ENCODE measurements at regions of chr2 and their contacts with region 1.

Region 1: DNA sequence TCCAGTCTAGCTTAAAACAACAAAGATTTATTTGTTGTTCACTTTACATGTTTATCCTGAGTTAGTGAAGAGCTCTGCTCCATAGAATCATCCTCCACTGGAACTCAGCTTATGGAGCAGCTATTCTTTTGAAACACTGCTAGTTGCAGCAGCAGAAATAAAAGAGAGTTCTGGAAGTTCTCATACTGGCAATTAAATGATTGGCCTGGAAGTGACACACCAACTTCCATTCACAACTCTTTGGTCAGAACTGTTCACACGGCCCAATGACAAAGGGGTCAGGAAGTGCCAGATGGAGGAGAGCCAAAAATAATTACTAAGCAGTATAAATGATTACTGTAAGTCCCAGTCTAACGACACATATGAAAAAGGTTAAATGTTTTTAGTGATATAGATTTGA is 39.1 kb downstream of the FBXO11 start:
- DNase-seq: no peak
- H3K4me3 ChIP-seq: no peak overlapping the region
- H3K27ac ChIP-seq: peak overlapping the region in 3 of 4 donors; percentile 22 to 50 (median 38)
- H3K4me1 ChIP-seq: peaks cover 8 to 53% (median 25%) of the 10 kb centered on the region in 4 donors
- H3K27me3 ChIP-seq: no peaks in the 10 kb centered on the region
- CTCF ChIP-seq: no peak
- EP300 ChIP-seq: no peak
- POLR2A ChIP-seq: no peak

Region 2: DNA sequence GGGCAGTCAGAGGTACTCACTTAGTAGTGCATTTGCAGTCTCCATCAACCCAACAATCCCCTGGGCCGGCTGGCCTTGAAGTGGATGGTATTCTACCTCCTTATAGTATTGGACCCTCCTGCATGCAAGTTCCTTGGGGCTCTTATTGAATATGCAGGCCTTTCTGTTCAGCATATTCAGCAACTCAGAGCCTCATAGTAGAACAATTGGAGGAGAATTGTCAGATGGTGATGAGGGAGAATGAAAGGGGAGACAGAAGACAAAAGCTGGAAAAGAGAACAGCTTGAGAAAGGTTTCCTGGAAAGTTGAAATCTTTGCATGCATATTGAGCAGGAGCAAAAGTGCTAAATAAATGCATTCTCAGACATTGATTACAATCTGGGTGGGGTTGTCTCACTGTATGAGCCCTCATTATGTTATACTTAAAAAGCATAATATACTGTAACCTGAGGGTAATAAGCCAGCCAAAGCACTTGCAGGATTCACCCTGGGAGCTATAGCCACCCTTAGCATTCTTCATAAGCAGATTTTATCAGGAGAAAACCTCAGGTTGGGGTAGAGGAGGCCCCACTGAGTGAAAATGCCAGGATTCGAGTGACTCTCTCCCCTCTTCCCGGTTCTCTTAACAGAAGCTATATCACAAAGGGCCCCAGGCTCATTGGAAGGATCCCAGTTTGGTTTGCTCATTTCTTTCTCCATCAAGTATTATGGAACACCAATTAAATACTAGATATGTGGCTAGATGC is 286.2 kb before region 1 on chr2:
- in situ Hi-C with region 1: no loop called
- intact Hi-C with region 1: no loop called
- DNase-seq: no peak
- H3K4me3 ChIP-seq: no peak overlapping the region
- H3K27ac ChIP-seq: no peak overlapping the region
- H3K4me1 ChIP-seq: no peaks in the 10 kb centered on the region
- H3K27me3 ChIP-seq: peaks cover 2% of the 10 kb centered on the region
- CTCF ChIP-seq: no peak
- EP300 ChIP-seq: no peak
- POLR2A ChIP-seq: no peak

Region 3: GRCh38 chr2:48026865-48027264 is 159.7 kb after region 1 on chr2:
- in situ Hi-C with region 1: no loop called
- intact Hi-C with region 1: no loop called
- DNase-seq: no peak
- H3K4me3 ChIP-seq: no peak overlapping the region
- H3K27ac ChIP-seq: no peak overlapping the region
- H3K4me1 ChIP-seq: no peaks in the 10 kb centered on the region
- H3K27me3 ChIP-seq: no peaks in the 10 kb centered on the region
- CTCF ChIP-seq: no peak
- EP300 ChIP-seq: no peak
- POLR2A ChIP-seq: no peak

Region 4: DNA sequence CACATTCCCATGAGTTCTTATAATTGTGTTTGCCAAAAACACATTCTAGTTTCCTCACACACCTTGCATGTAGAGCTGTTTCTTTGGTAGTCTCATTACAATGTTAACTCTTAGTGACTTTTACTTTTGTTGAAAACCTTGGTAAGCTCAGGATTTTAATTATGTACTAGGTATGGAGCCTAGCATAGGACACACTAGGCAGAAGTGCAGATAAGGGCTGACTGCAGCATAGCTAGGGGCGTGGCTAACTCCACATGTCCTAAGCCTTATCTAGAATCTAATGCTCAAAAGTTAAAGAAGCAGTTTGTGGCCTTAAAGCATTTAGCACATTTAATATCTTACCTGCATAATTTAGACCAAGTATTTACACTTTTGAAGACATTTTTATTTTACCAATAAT is 192.8 kb after region 1 on chr2:
- in situ Hi-C with region 1: no loop called
- intact Hi-C with region 1: no loop called
- DNase-seq: no peak
- H3K4me3 ChIP-seq: no peak overlapping the region
- H3K27ac ChIP-seq: no peak overlapping the region
- H3K4me1 ChIP-seq: no peaks in the 10 kb centered on the region
- H3K27me3 ChIP-seq: no peaks in the 10 kb centered on the region
- CTCF ChIP-seq: no peak
- EP300 ChIP-seq: no peak
- POLR2A ChIP-seq: no peak

Region 5: DNA sequence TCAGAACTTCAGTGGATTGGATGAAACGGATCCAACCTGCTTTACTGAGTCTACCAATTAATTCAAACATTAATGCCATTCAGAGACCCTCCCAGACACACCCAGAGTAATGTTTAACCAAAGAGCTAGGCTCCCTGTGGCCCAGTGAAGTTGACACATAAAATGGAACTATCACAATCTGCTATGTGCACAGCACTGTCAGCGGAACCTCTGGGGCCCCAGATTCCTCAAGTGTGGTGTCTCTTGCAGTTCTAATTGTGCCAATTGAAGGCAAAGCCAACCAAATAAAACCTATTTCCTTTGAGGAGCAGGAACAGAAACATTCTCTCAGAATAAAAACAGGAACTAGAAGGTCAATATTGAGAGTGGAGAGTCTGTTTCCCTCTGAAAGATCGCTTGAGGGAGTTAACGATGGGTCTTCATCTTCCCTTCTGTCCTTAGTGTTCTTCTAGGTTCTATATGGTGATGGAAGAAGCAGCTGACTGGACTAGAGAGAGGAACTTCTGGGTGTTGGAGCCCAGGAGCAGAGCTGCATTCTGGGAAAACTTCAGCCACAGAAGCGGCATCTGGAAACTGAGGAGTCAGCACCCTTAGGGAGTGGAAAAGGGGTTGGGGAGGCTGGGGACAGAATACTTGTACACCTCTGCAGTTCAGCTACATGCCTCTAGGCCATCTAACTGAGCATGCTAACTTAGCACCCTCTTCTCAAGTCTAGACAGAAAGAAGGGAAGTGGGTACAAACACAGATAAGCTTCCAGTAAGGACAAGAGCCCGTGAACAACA is 213.5 kb after region 1 on chr2:
- in situ Hi-C with region 1: loop called in 1 of 4 experiments (anchors 25 kb)
- intact Hi-C with region 1: no loop called
- DNase-seq: no peak
- H3K4me3 ChIP-seq: no peak overlapping the region
- H3K27ac ChIP-seq: no peak overlapping the region
- H3K4me1 ChIP-seq: no peaks in the 10 kb centered on the region
- H3K27me3 ChIP-seq: no peaks in the 10 kb centered on the region
- CTCF ChIP-seq: no peak
- EP300 ChIP-seq: no peak
- POLR2A ChIP-seq: no peak

Region 6: GRCh38 chr2:48107326-48107925 is 240.2 kb after region 1 on chr2:
- in situ Hi-C with region 1: loop called in 1 of 4 experiments (anchors 10 kb)
- intact Hi-C with region 1: no loop called
- DNase-seq: no peak
- H3K4me3 ChIP-seq: no peak overlapping the region
- H3K27ac ChIP-seq: peak overlapping the region; percentile 30 to 52 (median 36)
- H3K4me1 ChIP-seq: peaks cover 0 to 33% (median 20%) of the 10 kb centered on the region in 4 donors
- H3K27me3 ChIP-seq: no peaks in the 10 kb centered on the region
- CTCF ChIP-seq: no peak
- EP300 ChIP-seq: no peak
- POLR2A ChIP-seq: no peak

Region 7: DNA sequence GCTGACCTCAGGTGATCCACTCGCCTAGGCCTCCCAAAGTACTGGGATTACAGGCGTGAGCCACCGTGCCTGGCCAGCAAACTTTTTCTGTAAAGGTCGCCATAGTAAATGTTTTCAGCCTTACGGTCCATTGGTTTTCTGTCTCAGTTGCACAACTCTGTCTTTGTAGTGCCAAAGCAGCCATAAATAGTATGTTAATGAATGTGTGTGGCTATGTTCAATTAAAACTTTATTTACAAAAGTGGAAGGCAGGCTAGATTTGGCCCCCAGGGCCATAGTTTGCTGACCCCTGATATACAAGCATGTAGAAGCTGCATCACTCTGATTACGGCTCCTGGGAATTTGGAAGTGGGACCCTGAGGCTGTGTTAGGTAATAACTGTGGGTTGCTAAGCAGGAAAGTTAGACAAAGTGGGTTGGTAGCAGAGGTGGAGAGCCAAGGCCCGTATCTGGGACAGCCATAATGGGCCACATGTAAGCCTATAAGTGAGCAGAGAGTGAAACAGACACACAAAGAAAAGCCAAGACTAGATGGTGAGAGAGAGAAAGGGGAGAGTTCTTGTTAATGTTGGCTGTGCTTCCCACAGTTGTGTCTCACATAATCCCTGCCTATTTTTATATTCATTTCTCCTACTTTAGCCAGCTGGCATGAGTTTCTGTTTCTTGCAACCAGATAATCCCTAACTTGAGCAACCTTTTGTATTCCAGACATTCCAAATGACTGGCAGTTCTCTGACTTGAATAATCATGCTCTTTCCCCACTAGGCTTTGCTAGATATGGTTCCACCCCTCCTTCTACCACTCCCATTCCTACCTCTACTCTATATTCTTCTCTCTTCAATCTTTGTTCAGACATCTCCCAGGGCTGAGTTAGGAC is 439.4 kb after region 1 on chr2:
- in situ Hi-C with region 1: no loop called
- intact Hi-C with region 1: no loop called
- DNase-seq: no peak
- H3K4me3 ChIP-seq: no peak overlapping the region
- H3K27ac ChIP-seq: peak overlapping the region in 1 of 4 donors; percentile 48
- H3K4me1 ChIP-seq: no peaks in the 10 kb centered on the region
- H3K27me3 ChIP-seq: no peaks in the 10 kb centered on the region
- CTCF ChIP-seq: no peak
- EP300 ChIP-seq: no peak
- POLR2A ChIP-seq: no peak

Region 8: GRCh38 chr2:48420512-48421197 is 553.5 kb after region 1 on chr2:
- in situ Hi-C with region 1: loop called in 1 of 4 experiments (anchors 25 kb)
- intact Hi-C with region 1: no loop called
- DNase-seq: peak; percentile 91
- H3K4me3 ChIP-seq: no peak overlapping the region
- H3K27ac ChIP-seq: no peak overlapping the region
- H3K4me1 ChIP-seq: peaks cover 0 to 11% (median 3%) of the 10 kb centered on the region in 4 donors
- H3K27me3 ChIP-seq: peaks cover 7% of the 10 kb centered on the region
- CTCF ChIP-seq: peak; percentile 93 to 98 (median 97)
- EP300 ChIP-seq: no peak
- POLR2A ChIP-seq: no peak